ENCODE measurements at regions of chr1 and their contacts with region 1.

Region 1: DNA sequence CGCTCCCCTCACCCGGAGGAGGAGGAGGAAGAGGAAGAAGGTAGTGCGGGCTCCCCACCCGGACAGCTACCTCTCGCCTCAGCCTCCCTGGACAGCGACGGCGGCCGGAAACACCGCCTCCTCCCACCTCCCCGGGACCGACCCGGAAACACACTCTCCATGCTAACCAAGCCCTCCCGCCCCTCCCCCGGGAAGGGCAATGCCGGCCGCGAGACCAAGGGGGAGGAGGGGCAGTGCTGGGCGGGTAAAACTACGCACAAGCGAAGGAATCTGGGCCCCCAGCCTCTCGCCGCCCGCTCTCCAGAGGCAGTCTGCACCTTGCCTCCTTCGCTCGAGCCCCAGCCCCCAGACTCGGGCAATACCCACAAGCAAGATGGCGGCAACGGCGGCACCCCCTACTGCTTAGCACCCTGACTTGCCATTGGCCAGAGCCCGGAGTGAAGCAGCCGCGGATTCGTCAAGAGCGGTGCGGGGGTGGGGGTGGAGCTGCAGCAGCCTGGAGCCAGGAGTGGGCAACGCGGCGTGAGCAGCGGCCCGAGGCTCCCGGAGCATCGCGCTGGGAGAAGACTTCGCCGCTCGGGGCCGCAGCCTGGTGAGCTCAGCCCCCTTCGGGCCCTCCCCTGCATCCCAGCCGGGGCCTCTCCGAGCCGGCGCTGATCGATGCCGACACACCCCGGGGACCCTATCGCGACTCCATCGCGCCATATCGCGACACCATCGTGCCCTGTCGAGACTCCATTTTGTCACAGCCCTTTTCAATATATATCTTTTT is at the starts of genes KIAA0319L and NCDN:
- DNase-seq: peak; percentile 90 to 97 (median 94)
- ATAC-seq: peak; percentile 89
- H3K4me3 ChIP-seq: peak within 1 kb of the TSS; percentile 98
- H3K4me3 Mint-ChIP-seq: peak within 1 kb of the TSS; percentile 100
- H3K27ac ChIP-seq: peak within 1 kb of the TSS; percentile 77 to 84
- H3K27ac Mint-ChIP-seq: peak within 1 kb of the TSS; percentile 97
- H3K4me1 ChIP-seq: peaks cover 48% of the 10 kb centered on the region
- H3K4me1 Mint-ChIP-seq: peaks cover 75% of the 10 kb centered on the region
- H3K27me3 ChIP-seq: no peaks in the 10 kb centered on the region
- H3K27me3 Mint-ChIP-seq: no peaks in the 10 kb centered on the region
- CTCF ChIP-seq: no peak
- total RNA-seq, gene KIAA0319L: 50.9 to 53.3 TPM
- total RNA-seq, gene NCDN: 12.8 to 14.2 TPM

Region 2: DNA sequence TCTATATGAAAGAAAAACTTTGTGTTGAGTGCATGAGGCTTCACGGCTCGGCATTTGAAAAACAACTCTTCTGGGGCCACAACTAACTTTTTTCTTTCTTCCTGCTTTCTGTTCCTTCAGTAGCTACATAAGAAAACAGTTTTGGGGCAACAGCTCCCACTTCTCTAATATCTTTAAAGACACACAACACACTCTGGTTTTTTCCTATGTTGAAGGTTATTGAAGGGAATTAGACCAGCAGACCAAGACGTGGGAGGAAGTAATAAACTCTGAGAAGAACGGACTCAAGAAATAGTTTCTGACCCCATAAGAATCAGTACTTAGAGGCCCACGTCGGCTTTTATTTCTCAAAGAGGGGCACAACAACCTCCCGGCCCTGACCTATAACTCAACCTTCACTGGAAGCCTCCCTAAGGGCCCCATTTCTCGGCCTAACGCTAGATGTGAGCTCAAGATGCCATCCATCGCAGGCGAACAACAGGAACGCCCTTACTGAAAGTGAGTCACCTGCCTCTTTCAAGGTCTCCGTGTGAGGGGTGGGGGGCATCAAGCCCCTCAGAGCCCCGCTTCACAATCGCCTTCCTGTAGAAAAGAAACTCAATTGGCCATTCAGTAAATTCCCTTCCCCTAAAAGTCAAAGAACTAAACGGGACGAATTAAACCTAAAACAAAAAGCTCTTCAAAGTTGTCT is 526.6 kb before region 1 on chr1:
- CTCF ChIA-PET with region 1: no interaction called
- POLR2A ChIA-PET with region 1: no interaction called
- intact Hi-C with region 1: loop called in 1 of 2 experiments (anchors 10 kb)
- DNase-seq: peak; percentile 10 to 55 (median 30)
- ATAC-seq: peak; percentile 52
- H3K4me3 ChIP-seq: peak overlapping the region; percentile 92
- H3K4me3 Mint-ChIP-seq: peak overlapping the region; percentile 98
- H3K27ac ChIP-seq: peak overlapping the region; percentile 66 to 73
- H3K27ac Mint-ChIP-seq: peak overlapping the region; percentile 89
- H3K4me1 ChIP-seq: peaks cover 26% of the 10 kb centered on the region
- H3K4me1 Mint-ChIP-seq: peaks cover 47% of the 10 kb centered on the region
- H3K27me3 ChIP-seq: no peaks in the 10 kb centered on the region
- H3K27me3 Mint-ChIP-seq: no peaks in the 10 kb centered on the region
- CTCF ChIP-seq: no peak

Region 3: GRCh38 chr1:35202048-35202719 is 355.3 kb before region 1 on chr1:
- CTCF ChIA-PET with region 1: no interaction called
- POLR2A ChIA-PET with region 1: no interaction called
- intact Hi-C with region 1: loop called (anchors 5 kb)
- DNase-seq: peak; percentile 49 to 87 (median 62)
- ATAC-seq: peak; percentile 100
- H3K4me3 ChIP-seq: no peak overlapping the region
- H3K4me3 Mint-ChIP-seq: no peak overlapping the region
- H3K27ac ChIP-seq: no peak overlapping the region
- H3K27ac Mint-ChIP-seq: no peak overlapping the region
- H3K4me1 ChIP-seq: no peaks in the 10 kb centered on the region
- H3K4me1 Mint-ChIP-seq: peaks cover 9% of the 10 kb centered on the region
- H3K27me3 ChIP-seq: no peaks in the 10 kb centered on the region
- H3K27me3 Mint-ChIP-seq: no peaks in the 10 kb centered on the region
- CTCF ChIP-seq: peak; percentile 88

Region 4: GRCh38 chr1:35316264-35316663 is 241.2 kb before region 1 on chr1:
- CTCF ChIA-PET with region 1: no interaction called
- POLR2A ChIA-PET with region 1: no interaction called
- intact Hi-C with region 1: no loop called
- DNase-seq: no peak
- ATAC-seq: no peak
- H3K4me3 ChIP-seq: no peak overlapping the region
- H3K4me3 Mint-ChIP-seq: no peak overlapping the region
- H3K27ac ChIP-seq: no peak overlapping the region
- H3K27ac Mint-ChIP-seq: no peak overlapping the region
- H3K4me1 ChIP-seq: no peaks in the 10 kb centered on the region
- H3K4me1 Mint-ChIP-seq: peaks cover 13% of the 10 kb centered on the region
- H3K27me3 ChIP-seq: no peaks in the 10 kb centered on the region
- H3K27me3 Mint-ChIP-seq: no peaks in the 10 kb centered on the region
- CTCF ChIP-seq: no peak

Region 5: DNA sequence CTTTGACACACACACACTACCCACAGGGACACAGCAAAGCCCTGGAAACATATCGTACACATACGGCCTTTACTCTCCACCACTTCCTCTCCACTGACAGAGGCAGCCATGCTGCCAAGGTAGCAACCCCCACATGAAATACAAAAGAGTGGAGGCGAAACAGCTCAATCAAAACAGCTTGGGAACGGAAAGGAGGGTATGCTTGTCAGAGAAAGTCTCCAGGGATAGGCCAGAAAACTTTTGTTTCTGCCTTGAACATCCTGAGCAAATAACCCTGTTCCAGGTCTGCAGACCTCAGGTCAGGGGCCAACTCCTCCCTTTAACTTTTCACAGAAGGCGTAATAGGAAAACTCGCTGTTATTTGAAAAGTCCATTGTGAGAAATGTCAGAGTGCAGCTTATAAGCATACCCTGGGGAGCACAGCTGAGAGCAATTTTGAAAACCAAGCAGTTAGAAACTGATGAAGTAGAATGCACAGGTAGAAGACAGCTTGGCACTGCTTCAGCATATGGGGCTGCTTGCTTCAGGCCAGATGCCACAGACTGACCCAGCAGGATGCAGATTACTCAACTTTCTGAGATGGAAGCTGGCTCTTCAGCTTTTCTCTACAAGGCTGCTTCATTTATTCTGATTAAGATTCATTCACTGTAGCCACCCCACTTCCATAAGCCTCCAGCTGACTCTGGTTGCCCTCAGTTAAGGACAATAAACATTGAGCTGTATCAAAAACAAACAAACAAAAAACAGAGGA is 18.2 kb before region 1 on chr1:
- CTCF ChIA-PET with region 1: no interaction called
- POLR2A ChIA-PET with region 1: interaction called, 53 read pairs
- intact Hi-C with region 1: no loop called
- DNase-seq: peak in 11 of 14 experiments; percentile 20 to 83 (median 45)
- ATAC-seq: peak; percentile 91
- H3K4me3 ChIP-seq: peak overlapping the region; percentile 9
- H3K4me3 Mint-ChIP-seq: peak overlapping the region; percentile 87
- H3K27ac ChIP-seq: peak overlapping the region; percentile 59 to 64
- H3K27ac Mint-ChIP-seq: peak overlapping the region; percentile 97
- H3K4me1 ChIP-seq: peaks cover 45% of the 10 kb centered on the region
- H3K4me1 Mint-ChIP-seq: peaks cover 89% of the 10 kb centered on the region
- H3K27me3 ChIP-seq: no peaks in the 10 kb centered on the region
- H3K27me3 Mint-ChIP-seq: no peaks in the 10 kb centered on the region
- CTCF ChIP-seq: no peak

Region 6: GRCh38 chr1:35882945-35883634 is 325.6 kb after region 1 on chr1 and contains the start of gene AGO1:
- CTCF ChIA-PET with region 1: no interaction called
- POLR2A ChIA-PET with region 1: no interaction called
- intact Hi-C with region 1: loop called in 1 of 2 experiments (anchors 2 kb)
- DNase-seq: peak; percentile 94 to 98 (median 97)
- ATAC-seq: peak; percentile 98
- H3K4me3 ChIP-seq: peak within 1 kb of the TSS; percentile 100
- H3K4me3 Mint-ChIP-seq: peak within 1 kb of the TSS; percentile 95
- H3K27ac ChIP-seq: peak within 1 kb of the TSS; percentile 41 to 55
- H3K27ac Mint-ChIP-seq: peak within 1 kb of the TSS; percentile 69
- H3K4me1 ChIP-seq: peaks cover 39% of the 10 kb centered on the region
- H3K4me1 Mint-ChIP-seq: peaks cover 57% of the 10 kb centered on the region
- H3K27me3 ChIP-seq: no peaks in the 10 kb centered on the region
- H3K27me3 Mint-ChIP-seq: no peaks in the 10 kb centered on the region
- CTCF ChIP-seq: peak; percentile 90
- total RNA-seq, gene AGO1: 15.2 to 16.3 TPM